Uterus (tissue), 4 donors: ENCODE measurements at regions of chr1 and their contacts with region 1.

Region 1: GRCh38 chr1:23367791-23368561 is 1.7 kb downstream of the ZNF436 start:
- DNase-seq: peak; percentile 98
- H3K4me3 ChIP-seq: peak overlapping the region; percentile 85 to 90
- H3K27ac ChIP-seq: peak overlapping the region; percentile 98
- H3K4me1 ChIP-seq: peaks cover 4 to 8% of the 10 kb centered on the region in 2 donors
- H3K27me3 ChIP-seq: no peaks in the 10 kb centered on the region
- CTCF ChIP-seq: peak in 1 of 4 experiments; percentile 14
- POLR2A ChIP-seq: peak; percentile 76 to 85

Region 2: GRCh38 chr1:23224714-23225648 is 143.0 kb before region 1 on chr1:
- intact Hi-C with region 1: no loop called
- DNase-seq: no peak
- H3K4me3 ChIP-seq: no peak overlapping the region
- H3K27ac ChIP-seq: no peak overlapping the region
- H3K4me1 ChIP-seq: no peaks in the 10 kb centered on the region
- H3K27me3 ChIP-seq: no peaks in the 10 kb centered on the region
- CTCF ChIP-seq: no peak
- POLR2A ChIP-seq: no peak

Region 3: GRCh38 chr1:23344111-23344986 is 23.6 kb before region 1 on chr1 and contains the start of gene HNRNPR:
- intact Hi-C with region 1: loop called (anchors 2 kb)
- DNase-seq: peak; percentile 100
- H3K4me3 ChIP-seq: peak within 1 kb of the TSS; percentile 78 to 80
- H3K27ac ChIP-seq: peak within 1 kb of the TSS; percentile 95 to 99
- H3K4me1 ChIP-seq: peaks cover 0 to 3% of the 10 kb centered on the region in 2 donors
- H3K27me3 ChIP-seq: no peaks in the 10 kb centered on the region
- CTCF ChIP-seq: peak in 2 of 4 experiments; percentile 21 to 24
- POLR2A ChIP-seq: peak; percentile 70 to 94
- total RNA-seq, gene HNRNPR: 29.7 to 230 (median 116) TPM